GM23248 (cell line): ENCODE measurements at regions of chr6 and their contacts with region 1.

Region 1: DNA sequence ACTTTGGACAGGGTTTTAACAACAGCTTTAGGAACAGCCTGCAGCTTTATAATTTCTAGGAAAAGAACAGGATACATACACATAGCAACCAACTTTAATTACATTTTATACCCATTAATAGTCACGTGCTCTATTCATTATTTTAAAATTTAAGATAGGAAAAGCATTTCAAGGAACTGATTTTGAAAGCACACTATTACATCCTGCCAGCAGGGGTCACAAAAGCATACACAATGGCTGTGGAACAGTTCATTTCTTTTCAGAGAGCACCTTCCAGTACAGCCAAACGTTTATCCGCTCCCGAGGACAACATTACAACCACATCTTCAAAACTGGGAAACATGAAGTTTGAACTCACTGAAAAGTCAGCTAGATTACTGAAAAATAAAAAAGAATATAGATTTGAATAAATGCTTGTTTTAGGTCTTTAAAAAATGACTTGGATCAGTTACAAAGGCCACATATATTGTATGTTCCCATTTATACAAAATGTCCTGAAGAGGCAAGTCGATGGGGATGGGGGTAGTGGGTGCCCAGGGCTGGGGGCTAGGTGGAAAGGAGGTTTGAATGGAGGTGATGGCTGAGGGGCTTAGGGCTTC is 104.6 kb upstream of the EXOC2 start:
- DNase-seq: peak; percentile 79
- H3K4me3 ChIP-seq: no peak overlapping the region
- H3K27ac ChIP-seq: no peak overlapping the region
- H3K4me1 ChIP-seq: no peaks in the 10 kb centered on the region
- H3K27me3 ChIP-seq: peaks cover 66% of the 10 kb centered on the region

Region 2: DNA sequence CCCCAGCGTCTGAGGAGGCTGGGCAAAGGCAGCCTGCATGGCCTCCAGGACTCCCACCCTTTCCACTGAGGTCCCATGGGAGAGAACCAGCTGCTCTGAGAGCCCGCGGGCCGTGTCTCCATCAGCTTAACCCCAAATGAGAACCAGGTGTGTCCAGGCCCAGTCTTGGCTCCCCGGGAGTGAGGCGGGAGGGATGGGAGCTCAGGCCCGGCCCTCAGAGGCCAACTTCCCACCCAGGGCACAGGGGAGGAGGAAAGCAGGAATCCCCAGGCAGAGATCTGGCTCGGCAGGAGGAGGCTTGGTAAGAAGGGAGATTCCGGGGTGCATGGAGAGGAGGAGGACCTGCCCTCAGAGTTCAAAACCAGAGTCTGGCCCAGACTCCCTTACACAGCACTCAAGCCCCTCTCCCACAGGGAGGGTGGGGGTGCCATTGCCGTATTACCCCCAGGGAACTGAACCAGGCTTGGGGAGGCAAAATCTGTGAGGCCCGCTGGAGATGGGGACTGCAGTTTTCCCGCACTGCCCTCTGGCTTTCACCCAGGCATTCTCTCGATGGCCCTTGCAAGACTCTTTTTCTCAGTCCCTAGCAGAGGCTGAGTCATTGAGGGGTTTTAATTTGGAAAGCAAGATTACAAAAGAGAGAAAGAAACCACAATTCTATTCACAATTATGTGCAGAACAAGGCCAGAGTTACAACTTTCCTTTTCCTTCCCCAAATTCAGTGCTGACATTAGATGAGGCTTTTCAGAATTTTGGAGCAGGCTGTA is 608.9 kb after region 1 on chr6:
- in situ Hi-C with region 1: loop called (anchors 10 kb)
- DNase-seq: peak; percentile 43
- H3K4me3 ChIP-seq: no peak overlapping the region
- H3K27ac ChIP-seq: no peak overlapping the region
- H3K4me1 ChIP-seq: no peaks in the 10 kb centered on the region
- H3K27me3 ChIP-seq: no peaks in the 10 kb centered on the region

Region 3: DNA sequence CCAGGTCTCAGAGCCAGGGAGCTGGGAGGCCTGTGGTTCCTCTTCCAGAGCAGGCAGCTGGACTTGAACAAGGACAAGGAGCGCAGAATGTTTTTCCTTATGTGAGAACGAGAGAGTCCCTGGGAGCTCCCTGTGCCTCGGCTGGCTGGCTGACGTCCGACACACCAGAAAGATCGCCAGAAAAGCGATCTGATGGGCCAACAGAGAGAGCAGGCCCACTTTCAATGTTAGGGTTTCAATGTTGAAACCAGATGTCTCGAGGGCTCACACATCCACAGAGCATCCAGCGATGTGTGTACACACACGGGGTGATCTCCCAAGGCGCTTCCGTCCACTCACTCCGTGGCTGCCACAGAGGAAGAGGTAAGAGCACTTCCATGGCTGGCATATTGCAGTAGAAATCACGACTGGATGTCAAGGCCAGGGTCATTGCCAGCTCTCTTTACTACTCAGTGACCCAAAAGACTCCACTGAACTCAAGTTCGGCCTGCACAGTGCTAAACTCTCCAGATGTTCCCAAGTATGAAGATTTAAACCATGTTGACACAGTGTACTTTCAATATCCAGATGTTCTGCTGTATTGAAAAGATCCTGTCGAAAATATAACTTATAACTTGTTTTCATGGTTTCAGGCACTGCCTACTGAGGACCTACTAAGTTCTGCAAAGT is 741.4 kb after region 1 on chr6:
- in situ Hi-C with region 1: no loop called
- DNase-seq: peak; percentile 4
- H3K4me3 ChIP-seq: no peak overlapping the region
- H3K27ac ChIP-seq: no peak overlapping the region
- H3K4me1 ChIP-seq: peaks cover 6% of the 10 kb centered on the region
- H3K27me3 ChIP-seq: no peaks in the 10 kb centered on the region